Right lobe of liver (tissue), 6 donors: ENCODE measurements at regions of chrX and their contacts with region 1.

Region 1: GRCh38 chrX:19334945-19335626 is 8.6 kb upstream of the PDHA1 start:
- DNase-seq: no peak
- ATAC-seq: peak in 3 of 4 donors; percentile 29 to 54 (median 51)
- H3K4me3 ChIP-seq: no peak overlapping the region
- H3K27ac ChIP-seq: no peak overlapping the region
- H3K4me1 ChIP-seq: no peaks in the 10 kb centered on the region
- H3K27me3 ChIP-seq: no peaks in the 10 kb centered on the region
- CTCF ChIP-seq: peak; percentile 18 to 51 (median 23)
- POLR2A ChIP-seq: no peak

Region 2: GRCh38 chrX:18390941-18391538 is 944.0 kb before region 1 on chrX:
- intact Hi-C with region 1: loop called (anchors 10 kb)
- DNase-seq: peak in 2 of 3 donors; percentile 50 to 66
- ATAC-seq: peak; percentile 60 to 73 (median 64)
- H3K4me3 ChIP-seq: no peak overlapping the region
- H3K27ac ChIP-seq: no peak overlapping the region
- H3K4me1 ChIP-seq: peaks cover 0 to 6% (median 0%) of the 10 kb centered on the region in 4 donors
- H3K27me3 ChIP-seq: no peaks in the 10 kb centered on the region
- CTCF ChIP-seq: peak; percentile 76 to 88 (median 78)
- POLR2A ChIP-seq: no peak

Region 3: GRCh38 chrX:18899796-18900447 is 435.2 kb before region 1 on chrX:
- intact Hi-C with region 1: no loop called
- DNase-seq: no peak
- ATAC-seq: no peak
- H3K4me3 ChIP-seq: no peak overlapping the region
- H3K27ac ChIP-seq: no peak overlapping the region
- H3K4me1 ChIP-seq: no peaks in the 10 kb centered on the region
- H3K27me3 ChIP-seq: no peaks in the 10 kb centered on the region
- CTCF ChIP-seq: peak in 2 of 4 donors; percentile 10 to 24
- POLR2A ChIP-seq: no peak

Region 4: GRCh38 chrX:19005910-19006309 is 329.2 kb before region 1 on chrX:
- intact Hi-C with region 1: loop called in 1 of 2 experiments (anchors 10 kb)
- DNase-seq: no peak
- ATAC-seq: peak; percentile 46 to 79 (median 58)
- H3K4me3 ChIP-seq: no peak overlapping the region
- H3K27ac ChIP-seq: no peak overlapping the region
- H3K4me1 ChIP-seq: no peaks in the 10 kb centered on the region
- H3K27me3 ChIP-seq: no peaks in the 10 kb centered on the region
- CTCF ChIP-seq: peak in 3 of 4 donors; percentile 20 to 25 (median 24)
- POLR2A ChIP-seq: no peak

Region 5: GRCh38 chrX:19863212-19863856 is 528.2 kb after region 1 on chrX:
- intact Hi-C with region 1: no loop called
- DNase-seq: no peak
- ATAC-seq: no peak
- H3K4me3 ChIP-seq: no peak overlapping the region
- H3K27ac ChIP-seq: no peak overlapping the region
- H3K4me1 ChIP-seq: no peaks in the 10 kb centered on the region
- H3K27me3 ChIP-seq: no peaks in the 10 kb centered on the region
- CTCF ChIP-seq: no peak
- POLR2A ChIP-seq: no peak

Region 6: DNA sequence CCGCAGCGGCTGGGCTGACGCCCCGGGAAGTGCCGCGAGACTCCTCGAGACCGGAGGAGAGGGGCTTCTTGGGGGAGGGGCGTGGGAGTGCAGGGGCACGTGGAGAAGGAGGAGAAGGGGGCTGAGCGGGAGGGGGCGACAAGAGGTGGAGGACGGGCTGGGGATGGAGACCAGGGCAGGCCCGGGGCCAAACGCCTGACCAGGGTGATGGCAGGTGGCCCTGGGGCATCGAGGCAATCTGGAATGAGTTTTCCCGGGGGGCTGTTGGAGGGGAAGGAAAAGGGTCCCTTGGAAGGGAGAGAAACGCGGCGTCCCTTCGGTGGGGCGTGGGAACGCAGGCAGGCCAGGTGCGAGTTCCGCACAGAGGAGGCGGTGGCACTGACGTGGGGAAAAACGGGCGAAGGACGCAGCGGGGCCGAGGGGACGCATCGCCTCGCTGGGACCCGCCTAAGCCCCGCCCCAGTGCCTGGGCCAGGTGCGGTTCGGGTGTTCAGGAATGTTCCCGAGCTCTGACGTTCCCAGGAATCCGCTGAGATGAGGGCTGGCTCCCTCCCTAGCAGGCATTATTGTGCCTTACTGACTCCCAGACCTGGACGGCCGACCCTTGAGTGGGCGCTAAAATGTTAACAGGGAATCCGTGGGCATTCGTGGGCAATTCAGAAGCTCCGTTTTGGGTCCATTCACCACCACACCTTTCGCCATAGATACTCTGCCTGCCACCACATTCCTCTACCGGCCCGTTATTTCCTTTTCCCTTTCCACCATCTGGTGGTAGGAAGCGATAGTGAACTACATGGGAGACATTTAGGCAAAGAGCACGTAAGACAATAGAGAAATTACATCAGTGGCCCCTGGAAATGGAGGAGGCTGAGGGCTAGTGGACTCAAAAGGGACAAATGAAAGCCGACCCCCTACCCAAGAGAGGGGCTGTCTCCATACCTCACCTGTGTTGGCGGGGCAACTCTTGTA is 553.1 kb after region 1 on chrX:
- intact Hi-C with region 1: no loop called
- DNase-seq: peak; percentile 65 to 74 (median 68)
- ATAC-seq: peak; percentile 76 to 84 (median 82)
- H3K4me3 ChIP-seq: peak overlapping the region; percentile 40 to 65 (median 59)
- H3K27ac ChIP-seq: peak overlapping the region; percentile 62 to 73 (median 72)
- H3K4me1 ChIP-seq: no peaks in the 10 kb centered on the region
- H3K27me3 ChIP-seq: no peaks in the 10 kb centered on the region
- CTCF ChIP-seq: peak; percentile 41 to 72 (median 46)
- POLR2A ChIP-seq: no peak